Gastrocnemius medialis (tissue), 4 donors: ENCODE measurements at regions of chr19 and their contacts with region 1.

Region 1: DNA sequence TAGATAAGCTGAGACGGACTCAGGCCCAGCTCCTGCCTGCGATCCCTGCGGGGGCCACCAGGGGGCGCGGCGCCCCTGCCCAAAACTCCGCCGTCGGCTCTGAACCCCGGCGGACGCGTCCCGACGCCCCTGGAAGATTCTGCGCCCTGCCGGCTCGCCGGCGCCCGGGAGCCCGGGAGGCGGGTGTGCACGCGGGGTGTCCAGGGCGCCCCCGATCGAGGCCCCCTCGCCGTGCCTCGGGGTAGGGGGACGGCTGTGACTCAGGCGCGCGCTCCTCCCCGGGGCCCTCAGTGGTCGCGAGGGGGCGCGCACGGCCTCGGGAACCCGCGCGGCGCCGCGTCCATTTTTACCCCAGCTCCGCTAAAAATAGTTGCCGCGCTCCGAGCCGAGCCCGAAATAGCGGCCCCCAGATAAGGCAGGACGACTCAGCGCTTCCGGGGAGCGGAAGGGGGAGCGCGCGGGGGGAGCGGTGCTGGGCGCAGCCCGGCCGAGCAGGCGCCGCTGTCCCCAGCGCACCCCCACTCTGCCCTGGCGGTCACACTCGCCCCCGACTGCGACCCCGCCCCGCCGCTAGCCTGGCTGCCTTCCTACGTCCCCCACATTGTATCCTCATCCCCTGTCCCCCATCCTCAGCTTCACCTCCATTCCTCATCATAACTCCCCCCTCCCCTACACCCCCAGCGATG is 16.0 kb upstream of the ERCC1 start:
- DNase-seq: peak; percentile 80 to 90
- ATAC-seq: peak; percentile 80
- H3K4me3 ChIP-seq: peak overlapping the region; percentile 58 to 91 (median 66)
- H3K27ac ChIP-seq: peak overlapping the region; percentile 89 to 98 (median 98)
- H3K4me1 ChIP-seq: peaks cover 11 to 22% of the 10 kb centered on the region in 2 donors
- H3K27me3 ChIP-seq: no peaks in the 10 kb centered on the region
- CTCF ChIP-seq: peak; percentile 98 to 100 (median 100)
- POLR2A ChIP-seq: peak; percentile 55 to 79

Region 2: GRCh38 chr19:45469132-45469944 is 29.6 kb after region 1 on chr19:
- in situ Hi-C with region 1: no loop called
- intact Hi-C with region 1: loop called (anchors 1 kb)
- DNase-seq: peak; percentile 87 to 95
- ATAC-seq: peak; percentile 85 to 88
- H3K4me3 ChIP-seq: peak overlapping the region; percentile 64 to 84 (median 79)
- H3K27ac ChIP-seq: peak overlapping the region; percentile 90 to 98 (median 94)
- H3K4me1 ChIP-seq: peaks cover 20 to 22% of the 10 kb centered on the region in 2 donors
- H3K27me3 ChIP-seq: no peaks in the 10 kb centered on the region
- CTCF ChIP-seq: no peak
- POLR2A ChIP-seq: peak; percentile 79 to 93

Region 3: DNA sequence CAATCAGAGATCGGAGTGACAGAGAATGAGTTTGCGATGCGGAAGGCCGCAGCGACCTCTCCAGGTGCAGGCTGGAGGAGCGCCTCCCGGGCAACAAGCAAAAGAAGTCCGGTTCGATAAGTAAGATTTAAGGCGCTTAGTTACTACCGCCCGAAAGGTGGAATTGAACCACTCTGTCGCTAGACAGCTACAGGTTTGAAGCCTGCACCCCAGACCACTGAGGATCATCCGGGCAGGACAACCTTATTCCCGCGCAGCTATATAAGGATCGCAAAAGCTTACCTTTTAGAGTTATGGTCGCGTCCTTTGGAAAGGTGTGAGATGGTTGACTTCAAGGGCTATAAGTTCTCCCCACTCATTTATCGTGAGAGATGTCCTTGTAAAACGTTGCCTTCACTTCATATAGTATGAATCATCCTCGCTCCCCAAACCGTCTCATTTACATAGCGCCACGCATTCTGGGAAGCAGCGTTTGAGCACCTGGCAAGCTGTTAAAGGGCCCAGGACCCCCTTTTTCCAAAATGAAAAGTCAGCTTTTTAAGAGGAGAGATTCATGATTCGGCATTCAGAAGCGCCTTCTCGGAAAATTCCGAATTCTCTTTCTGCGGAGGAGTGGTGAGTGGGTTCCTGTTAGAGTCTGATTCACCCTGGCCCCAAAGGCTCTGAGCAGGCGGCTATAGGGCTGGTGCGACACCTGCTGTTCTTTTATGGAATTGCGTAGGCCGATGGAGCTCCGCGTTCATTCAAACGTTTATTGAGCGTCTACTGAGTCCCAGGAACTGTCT is 38.9 kb after region 1 on chr19:
- in situ Hi-C with region 1: loop called (anchors 5 kb)
- intact Hi-C with region 1: loop called (anchors 1 kb)
- DNase-seq: peak; percentile 62 to 82
- ATAC-seq: peak; percentile 87 to 91
- H3K4me3 ChIP-seq: peak overlapping the region; percentile 55 to 60 (median 56)
- H3K27ac ChIP-seq: peak overlapping the region; percentile 91 to 94 (median 91)
- H3K4me1 ChIP-seq: peaks cover 5 to 7% of the 10 kb centered on the region in 2 donors
- H3K27me3 ChIP-seq: no peaks in the 10 kb centered on the region
- CTCF ChIP-seq: peak; percentile 96 to 99 (median 99)
- POLR2A ChIP-seq: peak; percentile 55 to 71

Region 4: GRCh38 chr19:45484273-45484945 is 44.7 kb after region 1 on chr19:
- in situ Hi-C with region 1: loop called (anchors 5 kb)
- intact Hi-C with region 1: no loop called
- DNase-seq: no peak
- ATAC-seq: no peak
- H3K4me3 ChIP-seq: no peak overlapping the region
- H3K27ac ChIP-seq: peak overlapping the region; percentile 89 to 99 (median 93)
- H3K4me1 ChIP-seq: peaks cover 8 to 13% of the 10 kb centered on the region in 2 donors
- H3K27me3 ChIP-seq: no peaks in the 10 kb centered on the region
- CTCF ChIP-seq: no peak
- POLR2A ChIP-seq: no peak